IMR-90 (cell line): ENCODE measurements at regions of chr11 and their contacts with region 1.

Region 1: GRCh38 chr11:102007567-102008437 is 39.4 kb upstream of the CFAP300 start:
- DNase-seq: peak; percentile 66
- ATAC-seq: peak; percentile 59; the same call in 1 of the 2 replicates
- H3K4me3 ChIP-seq: no peak overlapping the region
- H3K27ac ChIP-seq: no peak overlapping the region
- H3K4me1 ChIP-seq: peaks cover 10% of the 10 kb centered on the region
- H3K27me3 ChIP-seq: no peaks in the 10 kb centered on the region
- CTCF ChIP-seq: peak; percentile 62
- POLR2A ChIP-seq: no peak
- RAD21 ChIP-seq: peak; percentile 65

Region 2: DNA sequence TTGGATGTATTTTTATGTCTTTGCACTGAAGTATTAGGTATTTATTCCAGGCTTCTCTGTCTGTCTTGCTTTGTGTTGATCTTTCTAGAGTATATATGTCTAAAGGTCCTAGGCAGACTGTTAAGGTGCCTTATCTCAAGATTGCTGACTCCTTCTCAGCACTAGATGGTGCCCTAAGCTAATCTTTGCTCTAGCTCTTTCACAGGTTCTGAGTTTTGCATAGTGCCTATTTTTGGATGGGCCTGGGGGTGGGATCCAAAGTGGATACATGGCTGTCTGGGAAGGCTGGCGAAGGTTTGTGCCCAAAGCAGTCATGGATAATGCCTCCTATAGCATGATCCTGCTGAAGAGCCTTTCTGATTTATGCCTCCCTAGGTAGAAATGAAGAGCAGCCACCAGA is 578.9 kb before region 1 on chr11:
- CTCF ChIA-PET with region 1: no interaction called
- POLR2A ChIA-PET with region 1: no interaction called
- dilution Hi-C with region 1: no loop called
- in situ Hi-C with region 1: no loop called
- intact Hi-C with region 1: loop called (anchors 5 kb)
- DNase-seq: peak; percentile 54
- ATAC-seq: peak; percentile 80
- H3K4me3 ChIP-seq: no peak overlapping the region
- H3K27ac ChIP-seq: no peak overlapping the region
- H3K4me1 ChIP-seq: peaks cover 7% of the 10 kb centered on the region
- H3K27me3 ChIP-seq: no peaks in the 10 kb centered on the region
- CTCF ChIP-seq: peak; percentile 63
- POLR2A ChIP-seq: no peak
- RAD21 ChIP-seq: peak; percentile 79

Region 3: DNA sequence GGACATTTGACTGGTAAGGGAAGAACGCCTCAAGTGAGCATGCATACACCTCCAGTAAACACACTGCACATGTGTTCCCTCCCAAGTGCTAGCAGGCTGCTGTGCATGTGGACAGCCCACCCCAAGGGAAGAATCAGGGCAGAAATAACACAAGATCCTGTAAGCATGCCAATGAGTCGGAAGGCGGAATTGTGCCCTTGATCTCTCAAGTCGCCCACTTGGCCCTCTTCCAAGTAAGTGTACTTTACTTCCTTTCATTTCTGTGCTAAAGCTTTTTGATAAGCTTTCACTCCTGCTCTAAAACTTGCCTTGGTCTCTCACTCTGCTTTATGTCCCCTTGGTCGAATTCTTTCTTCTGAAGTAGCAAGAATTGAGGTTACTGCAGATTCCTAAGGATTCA is 563.6 kb before region 1 on chr11:
- CTCF ChIA-PET with region 1: interaction called, 3 read pairs
- POLR2A ChIA-PET with region 1: no interaction called
- dilution Hi-C with region 1: no loop called
- in situ Hi-C with region 1: loop called (anchors 10 kb)
- intact Hi-C with region 1: no loop called
- DNase-seq: no peak
- ATAC-seq: no peak
- H3K4me3 ChIP-seq: no peak overlapping the region
- H3K27ac ChIP-seq: no peak overlapping the region
- H3K4me1 ChIP-seq: peaks cover 18% of the 10 kb centered on the region
- H3K27me3 ChIP-seq: no peaks in the 10 kb centered on the region
- CTCF ChIP-seq: no peak
- POLR2A ChIP-seq: no peak
- RAD21 ChIP-seq: no peak

Region 4: GRCh38 chr11:101456812-101457211 is 551.0 kb before region 1 on chr11:
- CTCF ChIA-PET with region 1: no interaction called
- POLR2A ChIA-PET with region 1: no interaction called
- dilution Hi-C with region 1: no loop called
- in situ Hi-C with region 1: no loop called
- intact Hi-C with region 1: loop called (anchors 5 kb)
- DNase-seq: peak; percentile 52
- ATAC-seq: peak; percentile 56
- H3K4me3 ChIP-seq: no peak overlapping the region
- H3K27ac ChIP-seq: no peak overlapping the region
- H3K4me1 ChIP-seq: peaks cover 5% of the 10 kb centered on the region; the same call in 1 of the 2 replicates
- H3K27me3 ChIP-seq: no peaks in the 10 kb centered on the region
- CTCF ChIP-seq: peak; percentile 68
- POLR2A ChIP-seq: no peak
- RAD21 ChIP-seq: peak; percentile 70

Region 5: GRCh38 chr11:101914738-101915426 is 92.9 kb before region 1 on chr11 and contains the start of gene CEP126:
- CTCF ChIA-PET with region 1: interaction called, 7 read pairs
- POLR2A ChIA-PET with region 1: no interaction called
- dilution Hi-C with region 1: no loop called
- in situ Hi-C with region 1: no loop called
- intact Hi-C with region 1: loop called (anchors 5 kb)
- DNase-seq: peak; percentile 93
- ATAC-seq: peak; percentile 96
- H3K4me3 ChIP-seq: peak within 1 kb of the TSS; percentile 97
- H3K27ac ChIP-seq: peak within 1 kb of the TSS; percentile 77
- H3K4me1 ChIP-seq: peaks cover 8% of the 10 kb centered on the region
- H3K27me3 ChIP-seq: no peaks in the 10 kb centered on the region
- CTCF ChIP-seq: peak; percentile 51
- POLR2A ChIP-seq: peak; percentile 69
- RAD21 ChIP-seq: peak; percentile 36
- total RNA-seq, gene CEP126: 0.72 and 1.1 TPM in 2 replicates

Region 6: DNA sequence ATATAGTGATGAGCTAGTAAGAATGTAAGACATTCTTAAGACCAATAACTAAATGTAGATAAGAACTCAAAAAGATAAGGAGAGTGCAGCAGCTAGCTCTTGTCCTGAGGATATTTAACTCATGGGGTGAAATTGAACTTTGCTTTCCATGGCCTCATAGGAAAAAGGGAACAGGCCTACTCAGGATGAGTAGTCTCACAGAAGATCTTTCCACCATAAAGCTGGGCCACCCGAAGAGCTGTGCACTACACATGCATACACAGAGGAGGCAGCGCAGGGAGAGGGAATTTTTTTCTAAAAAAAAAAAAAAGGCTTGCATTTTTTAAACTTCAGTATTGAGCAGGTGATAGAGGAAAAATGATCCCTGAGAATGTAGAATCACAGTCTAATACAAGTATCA is 20.4 kb before region 1 on chr11:
- CTCF ChIA-PET with region 1: no interaction called
- POLR2A ChIA-PET with region 1: no interaction called
- dilution Hi-C with region 1: no loop called
- in situ Hi-C with region 1: no loop called
- intact Hi-C with region 1: no loop called
- DNase-seq: no peak
- ATAC-seq: no peak
- H3K4me3 ChIP-seq: no peak overlapping the region
- H3K27ac ChIP-seq: no peak overlapping the region
- H3K4me1 ChIP-seq: no peaks in the 10 kb centered on the region
- H3K27me3 ChIP-seq: no peaks in the 10 kb centered on the region
- CTCF ChIP-seq: no peak
- POLR2A ChIP-seq: no peak
- RAD21 ChIP-seq: no peak

Region 7: DNA sequence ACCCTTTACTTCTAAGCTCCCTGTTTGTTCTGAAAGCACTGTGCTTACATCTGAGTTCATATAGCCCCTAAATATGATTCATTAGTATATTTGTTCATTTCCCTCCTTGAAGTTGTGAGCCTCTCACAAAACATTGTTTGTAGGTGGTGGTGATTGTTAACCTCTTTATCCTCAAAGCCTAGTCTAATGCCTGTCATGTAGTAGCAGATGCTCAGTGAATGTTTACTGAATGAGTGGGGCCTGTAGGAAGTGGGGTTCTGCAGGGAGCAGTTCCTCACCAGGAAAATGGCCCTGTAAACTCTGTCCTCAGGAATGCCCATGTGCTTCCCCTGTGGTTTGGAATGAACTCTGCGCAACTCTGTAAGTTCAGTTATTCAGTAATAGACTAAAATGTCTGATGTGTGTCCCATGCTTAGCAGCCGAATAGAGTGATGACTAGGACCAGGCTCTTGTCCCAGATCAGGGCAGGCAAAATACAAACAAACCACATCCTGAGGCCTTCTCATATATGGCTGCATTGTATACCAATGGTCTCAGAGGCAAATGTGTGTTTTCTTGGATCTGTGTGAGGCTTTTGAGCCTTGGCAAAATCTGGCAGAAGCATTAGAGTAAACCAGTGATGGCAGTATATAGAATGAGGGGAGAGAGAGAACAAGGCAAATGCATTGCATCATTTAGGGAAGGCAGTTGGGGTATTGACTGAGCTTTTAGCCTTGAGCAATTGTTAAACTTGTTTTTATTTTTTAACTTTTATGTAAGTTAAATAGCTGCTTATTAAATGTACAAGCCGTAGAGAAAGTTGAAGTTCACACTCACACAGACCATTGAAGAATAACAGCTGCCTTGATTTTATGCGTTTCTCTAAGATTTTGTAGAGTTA is 218.1 kb after region 1 on chr11:
- CTCF ChIA-PET with region 1: no interaction called
- POLR2A ChIA-PET with region 1: no interaction called
- dilution Hi-C with region 1: no loop called
- in situ Hi-C with region 1: no loop called
- intact Hi-C with region 1: no loop called
- DNase-seq: peak; percentile 97
- ATAC-seq: peak; percentile 91
- H3K4me3 ChIP-seq: peak overlapping the region; percentile 11; the same call in 1 of the 2 replicates
- H3K27ac ChIP-seq: peak overlapping the region; percentile 42; the same call in 1 of the 2 replicates
- H3K4me1 ChIP-seq: peaks cover 18% of the 10 kb centered on the region
- H3K27me3 ChIP-seq: no peaks in the 10 kb centered on the region
- CTCF ChIP-seq: no peak
- POLR2A ChIP-seq: peak; percentile 50; the same call in 1 of the 2 replicates
- RAD21 ChIP-seq: peak; percentile 1; the same call in 1 of the 2 replicates